A673 (cell line): ENCODE measurements at regions of chr9 and their contacts with region 1.

Region 1: GRCh38 chr9:19102631-19103345 is at the start of gene HAUS6:
- DNase-seq: peak; percentile 94
- H3K4me3 ChIP-seq: peak within 1 kb of the TSS; percentile 72
- H3K27ac ChIP-seq: peak within 1 kb of the TSS; percentile 75
- H3K4me1 ChIP-seq: no peaks in the 10 kb centered on the region
- H3K27me3 ChIP-seq: no peaks in the 10 kb centered on the region
- CTCF ChIP-seq: no peak
- total RNA-seq, gene HAUS6: 22.1 and 26.1 TPM in 2 replicates

Region 2: GRCh38 chr9:19085295-19085694 is 17.5 kb before region 1 on chr9:
- CTCF ChIA-PET with region 1: no interaction called
- POLR2A ChIA-PET with region 1: interaction called, 11 read pairs
- intact Hi-C with region 1: no loop called
- DNase-seq: peak; percentile 6
- H3K4me3 ChIP-seq: no peak overlapping the region
- H3K27ac ChIP-seq: no peak overlapping the region
- H3K4me1 ChIP-seq: no peaks in the 10 kb centered on the region
- H3K27me3 ChIP-seq: no peaks in the 10 kb centered on the region
- CTCF ChIP-seq: peak; percentile 38

Region 3: GRCh38 chr9:19127881-19128500 is 25.2 kb after region 1 on chr9:
- CTCF ChIA-PET with region 1: no interaction called
- POLR2A ChIA-PET with region 1: no interaction called
- intact Hi-C with region 1: no loop called
- DNase-seq: no peak
- H3K4me3 ChIP-seq: peak overlapping the region; percentile 15
- H3K27ac ChIP-seq: no peak overlapping the region
- H3K4me1 ChIP-seq: no peaks in the 10 kb centered on the region
- H3K27me3 ChIP-seq: no peaks in the 10 kb centered on the region
- CTCF ChIP-seq: no peak

Region 4: GRCh38 chr9:19149230-19149629 is 46.4 kb after region 1 on chr9:
- CTCF ChIA-PET with region 1: no interaction called
- POLR2A ChIA-PET with region 1: no interaction called
- intact Hi-C with region 1: no loop called
- DNase-seq: no peak
- H3K4me3 ChIP-seq: no peak overlapping the region
- H3K27ac ChIP-seq: no peak overlapping the region
- H3K4me1 ChIP-seq: no peaks in the 10 kb centered on the region
- H3K27me3 ChIP-seq: no peaks in the 10 kb centered on the region
- CTCF ChIP-seq: no peak

Region 5: GRCh38 chr9:19379697-19380046 is 276.9 kb after region 1 on chr9:
- CTCF ChIA-PET with region 1: no interaction called
- POLR2A ChIA-PET with region 1: no interaction called
- intact Hi-C with region 1: loop called (anchors 10 kb)
- DNase-seq: no peak
- H3K4me3 ChIP-seq: peak overlapping the region; percentile 77
- H3K27ac ChIP-seq: peak overlapping the region; percentile 92
- H3K4me1 ChIP-seq: no peaks in the 10 kb centered on the region
- H3K27me3 ChIP-seq: no peaks in the 10 kb centered on the region
- CTCF ChIP-seq: no peak